PC-9 (cell line): ENCODE measurements at regions of chr14 and their contacts with region 1.

Region 1: DNA sequence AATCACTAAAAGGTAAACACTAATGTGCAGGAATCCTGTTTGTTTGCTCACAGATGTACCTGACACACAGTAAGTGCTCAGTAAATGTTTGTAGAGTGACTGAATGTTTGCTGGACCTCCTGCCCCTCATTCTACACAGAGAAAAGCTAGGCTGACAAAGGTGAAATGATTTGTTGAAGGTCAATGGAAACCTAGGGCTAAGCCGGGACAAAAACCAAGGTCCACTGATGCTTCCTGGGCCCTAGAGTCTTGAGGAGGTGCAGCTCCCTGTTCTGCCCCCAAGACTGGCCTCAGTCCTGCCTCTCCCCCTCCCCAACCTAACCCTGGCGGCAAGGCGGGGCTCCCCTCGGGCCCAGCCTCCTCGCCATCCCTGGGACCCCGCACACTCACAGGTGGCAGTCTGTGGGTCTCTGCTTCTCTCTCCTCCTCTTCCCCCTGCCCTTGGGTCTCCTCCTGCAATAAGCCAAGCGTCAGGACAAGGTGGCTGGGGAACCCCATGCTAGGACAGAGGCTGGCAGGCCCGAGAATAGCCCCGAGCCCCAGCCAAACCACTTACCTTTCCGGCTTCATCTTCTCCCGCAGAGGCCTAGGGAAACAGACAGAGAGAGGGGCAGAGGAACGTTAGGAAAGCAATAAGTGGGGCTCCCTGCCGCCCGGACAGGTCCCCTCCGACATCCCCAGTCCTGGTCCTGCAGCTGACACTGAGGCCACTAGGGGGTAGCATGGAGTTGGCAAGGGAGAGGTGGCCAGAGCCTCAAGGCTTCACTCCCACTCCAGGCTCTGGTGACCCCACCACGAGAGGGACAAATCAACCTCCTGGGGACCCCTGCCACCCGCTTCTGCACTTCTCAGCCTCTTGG is 9.3 kb downstream of the PGF start:
- DNase-seq: peak; percentile 73 to 91
- H3K4me3 ChIP-seq: no peak overlapping the region
- H3K27ac ChIP-seq: no peak overlapping the region
- H3K4me1 ChIP-seq: peaks cover 9% of the 10 kb centered on the region; the same call in 1 of the 2 replicates
- H3K27me3 ChIP-seq: no peaks in the 10 kb centered on the region
- CTCF ChIP-seq: peak; percentile 99

Region 2: GRCh38 chr14:74720526-74720925 is 225.5 kb before region 1 on chr14:
- CTCF ChIA-PET with region 1: no interaction called
- POLR2A ChIA-PET with region 1: no interaction called
- intact Hi-C with region 1: no loop called
- DNase-seq: no peak
- H3K4me3 ChIP-seq: no peak overlapping the region
- H3K27ac ChIP-seq: no peak overlapping the region
- H3K4me1 ChIP-seq: no peaks in the 10 kb centered on the region
- H3K27me3 ChIP-seq: no peaks in the 10 kb centered on the region
- CTCF ChIP-seq: no peak

Region 3: DNA sequence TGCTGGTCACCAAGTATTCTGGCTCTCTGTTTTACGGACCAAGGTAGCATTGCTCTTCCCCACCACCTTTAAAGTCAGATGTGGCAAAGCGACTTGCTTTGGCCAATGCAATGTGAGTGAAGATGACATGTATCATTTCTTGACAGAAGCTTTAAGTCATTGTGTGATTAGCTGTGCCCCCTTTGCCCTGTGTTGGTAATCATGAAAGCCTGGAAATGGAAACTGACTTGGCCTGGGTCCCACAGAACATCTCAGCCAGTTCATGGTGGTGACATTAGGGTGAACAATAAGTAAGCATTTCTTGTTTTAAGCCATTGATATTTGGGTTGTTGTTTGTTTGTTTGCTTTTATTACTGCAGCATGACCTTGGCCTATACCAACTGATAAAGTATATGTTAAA is 198.8 kb before region 1 on chr14:
- CTCF ChIA-PET with region 1: no interaction called
- POLR2A ChIA-PET with region 1: no interaction called
- intact Hi-C with region 1: no loop called
- DNase-seq: no peak
- H3K4me3 ChIP-seq: no peak overlapping the region
- H3K27ac ChIP-seq: no peak overlapping the region
- H3K4me1 ChIP-seq: no peaks in the 10 kb centered on the region
- H3K27me3 ChIP-seq: no peaks in the 10 kb centered on the region
- CTCF ChIP-seq: no peak

Region 4: DNA sequence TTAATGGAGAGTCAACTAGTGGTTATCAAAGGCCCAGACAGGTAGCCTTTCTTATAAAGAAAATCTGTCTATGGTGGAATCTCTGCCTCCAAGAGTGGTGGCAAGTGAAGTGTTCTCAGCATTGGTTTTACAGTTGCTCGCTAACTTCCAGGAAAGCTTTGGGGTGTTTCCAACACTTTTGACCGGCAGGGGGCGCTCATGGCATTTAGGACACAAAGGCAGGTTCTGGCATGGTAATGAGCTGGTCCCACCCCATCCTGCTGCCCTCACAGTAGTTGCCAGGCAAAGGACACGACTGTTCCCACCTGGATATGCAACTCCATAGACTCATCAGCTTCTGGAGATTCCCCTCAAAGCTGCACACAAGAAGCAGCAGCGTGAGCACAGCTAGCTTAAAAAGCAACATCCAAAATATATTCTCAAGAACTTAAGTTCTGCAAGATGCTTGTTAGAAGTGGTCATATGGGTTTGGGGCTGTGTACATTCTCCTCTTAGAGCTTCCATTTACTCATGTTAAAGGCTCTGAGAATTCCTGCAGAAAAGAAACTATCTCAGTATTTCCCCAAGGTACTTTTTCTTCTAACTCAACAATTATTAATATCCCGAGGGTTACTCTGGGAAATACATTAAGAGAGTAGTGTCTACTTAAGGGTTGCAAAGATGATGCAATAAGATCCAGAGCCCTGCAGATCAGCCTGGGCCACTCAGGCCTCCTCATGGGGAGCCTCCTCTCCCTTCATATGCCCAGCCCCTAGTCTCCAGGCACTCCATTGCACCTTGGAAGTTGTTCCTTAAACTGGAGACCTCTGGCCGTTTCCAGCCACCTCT is 84.9 kb before region 1 on chr14:
- CTCF ChIA-PET with region 1: interaction called, 8 read pairs
- POLR2A ChIA-PET with region 1: interaction called, 3 read pairs
- intact Hi-C with region 1: loop called (anchors 1 kb)
- DNase-seq: peak; percentile 73 to 96
- H3K4me3 ChIP-seq: no peak overlapping the region
- H3K27ac ChIP-seq: no peak overlapping the region
- H3K4me1 ChIP-seq: peaks cover 5% of the 10 kb centered on the region; the same call in 1 of the 2 replicates
- H3K27me3 ChIP-seq: no peaks in the 10 kb centered on the region
- CTCF ChIP-seq: peak; percentile 99

Region 5: DNA sequence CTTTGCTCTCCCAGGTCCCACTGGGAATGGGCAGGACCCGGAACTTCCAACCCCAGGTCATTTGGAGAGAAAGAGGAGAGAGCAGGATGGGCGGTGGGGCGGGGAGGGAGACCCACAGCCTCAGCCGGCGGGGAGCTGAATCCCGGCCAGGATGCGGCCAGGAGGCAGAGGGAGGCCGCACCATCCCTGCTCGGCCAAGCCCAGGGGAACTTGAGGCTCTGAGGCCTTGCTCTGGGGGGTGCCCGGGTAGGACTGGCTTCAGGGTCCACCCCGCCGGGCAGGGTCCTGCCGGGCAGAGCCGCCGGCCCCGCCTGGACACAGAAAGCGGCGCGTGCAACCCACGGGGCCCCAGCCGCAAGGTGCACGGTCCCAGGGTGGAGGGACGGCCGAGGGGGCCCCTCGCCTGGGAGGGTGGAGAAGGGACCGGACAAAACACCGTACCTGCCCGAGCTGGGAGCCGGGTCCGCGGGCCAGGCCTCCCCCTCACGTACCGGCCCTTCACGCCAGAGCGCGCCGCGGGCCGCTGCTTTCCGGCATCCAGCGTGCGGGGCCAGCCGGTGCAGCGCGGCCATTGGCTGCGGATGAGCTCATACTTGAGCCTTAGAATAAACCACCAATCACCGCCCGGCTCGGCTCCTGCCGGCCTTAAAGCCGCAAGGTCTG is 23.2 kb before region 1 on chr14 and contains the start of gene RPS6KL1:
- CTCF ChIA-PET with region 1: interaction called, 10 read pairs
- POLR2A ChIA-PET with region 1: interaction called, 10 read pairs
- intact Hi-C with region 1: no loop called
- DNase-seq: peak; percentile 66 to 87
- H3K4me3 ChIP-seq: peak within 1 kb of the TSS; percentile 76
- H3K27ac ChIP-seq: no peak within 1 kb of the TSS
- H3K4me1 ChIP-seq: peaks cover 4% of the 10 kb centered on the region
- H3K27me3 ChIP-seq: 0 out of 2 replicates have a peak, but pooled peaks cover 4% of the 10 kb centered on the region
- CTCF ChIP-seq: no peak
- total RNA-seq, gene RPS6KL1: 3.4 and 4.2 TPM in 2 replicates

Region 6: DNA sequence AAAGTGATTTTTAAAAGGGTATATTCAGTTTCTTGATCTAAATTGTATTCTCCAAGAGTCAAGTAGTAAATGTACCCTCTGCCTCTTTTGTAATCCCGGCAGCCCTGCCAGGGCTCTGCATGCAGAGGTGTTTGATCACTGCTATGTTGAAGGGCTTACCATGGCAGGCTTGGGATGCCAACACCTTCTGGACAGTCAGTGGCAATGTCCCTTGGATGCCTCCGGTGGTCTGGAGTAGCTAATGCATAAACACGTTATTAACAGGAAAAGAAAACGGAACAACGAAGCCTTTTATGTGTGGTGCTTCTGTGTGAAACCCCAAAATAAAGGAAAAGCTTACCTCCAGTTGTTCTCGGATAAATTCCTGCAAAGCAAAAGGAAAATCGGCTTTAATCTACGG is 76.6 kb after region 1 on chr14:
- CTCF ChIA-PET with region 1: interaction called, 3 read pairs
- POLR2A ChIA-PET with region 1: no interaction called
- intact Hi-C with region 1: loop called (anchors 1 kb)
- DNase-seq: peak in 1 of 2 experiments; percentile 56
- H3K4me3 ChIP-seq: no peak overlapping the region
- H3K27ac ChIP-seq: no peak overlapping the region
- H3K4me1 ChIP-seq: peaks cover 14% of the 10 kb centered on the region
- H3K27me3 ChIP-seq: no peaks in the 10 kb centered on the region
- CTCF ChIP-seq: peak; percentile 79

Region 7: GRCh38 chr14:75088574-75089373 is 142.7 kb after region 1 on chr14:
- CTCF ChIA-PET with region 1: interaction called, 5 read pairs
- POLR2A ChIA-PET with region 1: no interaction called
- intact Hi-C with region 1: loop called (anchors 1 kb)
- DNase-seq: peak; percentile 59 to 67
- H3K4me3 ChIP-seq: no peak overlapping the region
- H3K27ac ChIP-seq: no peak overlapping the region
- H3K4me1 ChIP-seq: no peaks in the 10 kb centered on the region
- H3K27me3 ChIP-seq: no peaks in the 10 kb centered on the region
- CTCF ChIP-seq: peak; percentile 99

Region 8: GRCh38 chr14:75132382-75133086 is 186.5 kb after region 1 on chr14:
- CTCF ChIA-PET with region 1: no interaction called
- POLR2A ChIA-PET with region 1: no interaction called
- intact Hi-C with region 1: no loop called
- DNase-seq: peak; percentile 79 to 87
- H3K4me3 ChIP-seq: no peak overlapping the region
- H3K27ac ChIP-seq: peak overlapping the region; percentile 33
- H3K4me1 ChIP-seq: peaks cover 29% of the 10 kb centered on the region
- H3K27me3 ChIP-seq: no peaks in the 10 kb centered on the region
- CTCF ChIP-seq: peak; percentile 96